Activated T-helper 1 cell treated with anti-CD3 and anti-CD28 coated beads, Interleukin-12 subunit alpha, Interleukin-12 subunit beta, Interleukin-2, Interleukin-4 antibody, amounts not matched to agents 30 ng/mL and 10 ng/mL and 1 ng/mL, durations not matched to agents 14 hours and 24 hours and 36 hours (primary cell): ENCODE measurements at regions of chr17 and their contacts with region 1.

Region 1: DNA sequence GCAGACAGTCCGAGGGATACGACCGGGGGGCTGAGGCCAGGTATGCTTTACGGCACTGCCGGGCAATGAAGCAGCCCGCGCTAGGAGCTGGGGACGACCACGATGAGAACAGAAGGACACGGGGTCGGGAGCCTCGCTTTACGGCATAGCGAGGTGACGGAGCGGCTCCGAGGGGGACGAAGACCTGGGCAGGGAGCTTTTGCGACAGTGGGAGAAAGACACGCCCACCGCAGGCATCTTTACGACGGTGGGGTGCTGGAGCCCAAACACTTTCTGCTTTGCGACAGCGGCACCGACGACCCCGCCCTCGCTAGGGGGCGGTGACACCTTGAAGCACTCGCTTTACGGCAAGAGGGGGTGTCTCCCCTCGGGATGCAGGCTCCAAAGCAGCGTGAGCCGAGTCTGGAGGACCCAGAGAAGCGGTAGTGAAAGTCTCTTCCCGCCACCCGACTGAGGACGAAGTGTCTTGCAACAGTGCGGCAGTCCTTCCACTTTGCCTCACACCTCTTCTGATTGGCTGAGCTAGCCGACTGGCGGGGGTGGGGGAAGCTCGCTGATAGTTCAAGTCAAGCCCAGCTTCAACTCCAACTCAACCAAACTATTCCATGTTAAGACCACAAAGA is 350 bp upstream of the NEURL4 start:
- DNase-seq: peak; percentile 94
- H3K4me3 Mint-ChIP-seq: peak overlapping the region; percentile 93
- H3K27ac Mint-ChIP-seq: peak overlapping the region; percentile 94
- H3K4me1 Mint-ChIP-seq: peaks cover 38% of the 10 kb centered on the region
- H3K27me3 Mint-ChIP-seq: no peaks in the 10 kb centered on the region

Region 2: DNA sequence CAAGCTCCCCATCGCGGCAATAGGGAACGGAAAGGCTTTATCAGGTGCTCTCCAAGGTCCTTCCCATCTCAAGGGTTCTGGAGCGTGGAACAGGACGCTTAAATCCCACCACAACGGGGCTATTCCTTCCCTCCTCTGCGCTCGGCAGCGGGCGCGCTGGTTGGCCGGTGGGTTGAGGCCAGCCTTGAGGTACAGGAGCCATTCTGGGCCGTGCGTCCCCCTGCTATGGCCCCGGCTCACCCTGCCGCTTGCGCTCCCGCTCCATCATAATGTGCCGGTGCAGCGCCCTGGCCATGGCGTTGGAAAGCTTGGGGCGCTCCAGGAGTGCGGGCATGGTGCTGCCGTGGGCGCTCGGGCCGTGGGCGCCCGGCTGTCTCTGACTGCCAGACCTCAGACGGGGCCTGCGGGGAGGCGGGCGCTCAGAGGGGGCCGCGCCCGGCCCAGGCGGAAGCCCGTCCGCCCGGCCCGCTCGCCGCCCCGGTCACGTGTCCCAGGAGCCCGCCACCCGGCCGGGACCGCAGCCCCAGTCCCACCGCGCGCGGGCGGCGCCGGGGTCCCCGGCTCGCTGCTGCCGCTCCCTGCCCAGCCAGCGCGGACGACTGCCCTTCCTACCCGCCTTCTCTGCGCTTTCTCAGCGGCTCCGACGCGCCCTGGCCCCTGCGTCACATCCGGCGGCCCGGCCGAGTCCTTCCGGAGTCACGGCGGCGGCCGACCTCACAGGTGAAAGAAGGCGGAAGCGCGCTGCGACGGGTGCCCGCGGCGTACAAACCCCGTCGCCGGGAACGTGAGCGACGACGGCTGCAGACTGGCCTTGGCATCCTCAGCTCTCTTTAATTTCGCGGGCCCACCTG is 14.5 kb before region 1 on chr17 and contains the start of gene GPS2:
- intact Hi-C with region 1: loop called (anchors 1 kb)
- DNase-seq: peak; percentile 91
- H3K4me3 Mint-ChIP-seq: peak within 1 kb of the TSS; percentile 90
- H3K27ac Mint-ChIP-seq: peak within 1 kb of the TSS; percentile 88
- H3K4me1 Mint-ChIP-seq: peaks cover 41% of the 10 kb centered on the region
- H3K27me3 Mint-ChIP-seq: no peaks in the 10 kb centered on the region
- total RNA-seq, gene GPS2: 52.3 and 59.0 TPM in 2 replicates

Region 3: DNA sequence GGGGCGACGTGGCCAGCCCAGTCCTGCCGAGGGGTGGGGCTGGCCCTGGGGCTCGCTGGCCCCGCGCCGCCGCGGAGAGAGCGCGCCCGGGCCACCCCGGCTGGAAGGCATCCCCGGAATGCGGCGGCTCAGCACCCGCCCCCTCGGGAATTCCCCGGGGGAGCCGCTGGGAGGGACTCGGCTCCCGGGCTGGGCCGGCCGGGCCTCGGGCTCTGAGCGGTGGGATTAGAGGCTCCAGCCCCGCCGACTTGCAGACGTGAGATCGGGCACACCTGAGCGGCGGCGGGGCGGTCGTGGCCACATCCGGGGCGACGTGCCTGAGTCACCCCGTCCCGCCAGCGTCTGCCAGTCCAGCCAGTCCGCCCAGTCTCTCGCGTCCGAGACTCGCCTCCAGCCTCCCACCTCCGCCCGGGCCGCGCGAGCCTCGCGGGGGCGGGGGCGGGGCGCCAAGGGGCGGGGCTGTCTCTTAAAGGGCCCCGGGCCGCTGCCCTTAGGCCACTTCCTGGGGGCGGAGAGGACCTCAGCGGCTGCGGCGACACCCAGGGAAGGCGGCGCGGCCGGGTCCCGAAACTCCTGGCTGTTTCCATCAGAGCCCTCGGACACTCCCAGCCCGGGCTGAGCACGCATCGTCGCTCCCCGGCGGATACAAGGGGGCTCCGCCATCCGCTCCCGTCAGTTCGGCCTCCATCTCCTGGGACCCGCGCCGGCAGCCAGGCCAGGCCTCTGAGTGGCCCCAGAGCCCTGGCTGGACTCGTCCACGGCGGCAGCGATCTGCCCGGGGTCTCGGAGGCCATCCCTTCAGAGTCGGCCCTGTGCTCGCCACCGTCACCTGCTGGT is 22.4 kb after region 1 on chr17 and contains the start of gene KCTD11:
- intact Hi-C with region 1: loop called (anchors 1 kb)
- DNase-seq: peak; percentile 76
- H3K4me3 Mint-ChIP-seq: peak within 1 kb of the TSS; percentile 84
- H3K27ac Mint-ChIP-seq: peak within 1 kb of the TSS; percentile 87
- H3K4me1 Mint-ChIP-seq: peaks cover 41% of the 10 kb centered on the region
- H3K27me3 Mint-ChIP-seq: no peaks in the 10 kb centered on the region
- total RNA-seq, gene KCTD11: 5.3 TPM in 2 replicates

Region 4: GRCh38 chr17:7394452-7395191 is 65.1 kb after region 1 on chr17 and contains the start of gene PLSCR3:
- intact Hi-C with region 1: loop called (anchors 2 kb)
- DNase-seq: peak; percentile 82
- H3K4me3 Mint-ChIP-seq: peak within 1 kb of the TSS; percentile 97
- H3K27ac Mint-ChIP-seq: peak within 1 kb of the TSS; percentile 96
- H3K4me1 Mint-ChIP-seq: peaks cover 22% of the 10 kb centered on the region
- H3K27me3 Mint-ChIP-seq: peaks cover 2% of the 10 kb centered on the region
- total RNA-seq, gene PLSCR3: 77.1 and 78.2 TPM in 2 replicates